Natural killer cell (primary cell): ENCODE measurements at regions of chr6 and their contacts with region 1.

Region 1: DNA sequence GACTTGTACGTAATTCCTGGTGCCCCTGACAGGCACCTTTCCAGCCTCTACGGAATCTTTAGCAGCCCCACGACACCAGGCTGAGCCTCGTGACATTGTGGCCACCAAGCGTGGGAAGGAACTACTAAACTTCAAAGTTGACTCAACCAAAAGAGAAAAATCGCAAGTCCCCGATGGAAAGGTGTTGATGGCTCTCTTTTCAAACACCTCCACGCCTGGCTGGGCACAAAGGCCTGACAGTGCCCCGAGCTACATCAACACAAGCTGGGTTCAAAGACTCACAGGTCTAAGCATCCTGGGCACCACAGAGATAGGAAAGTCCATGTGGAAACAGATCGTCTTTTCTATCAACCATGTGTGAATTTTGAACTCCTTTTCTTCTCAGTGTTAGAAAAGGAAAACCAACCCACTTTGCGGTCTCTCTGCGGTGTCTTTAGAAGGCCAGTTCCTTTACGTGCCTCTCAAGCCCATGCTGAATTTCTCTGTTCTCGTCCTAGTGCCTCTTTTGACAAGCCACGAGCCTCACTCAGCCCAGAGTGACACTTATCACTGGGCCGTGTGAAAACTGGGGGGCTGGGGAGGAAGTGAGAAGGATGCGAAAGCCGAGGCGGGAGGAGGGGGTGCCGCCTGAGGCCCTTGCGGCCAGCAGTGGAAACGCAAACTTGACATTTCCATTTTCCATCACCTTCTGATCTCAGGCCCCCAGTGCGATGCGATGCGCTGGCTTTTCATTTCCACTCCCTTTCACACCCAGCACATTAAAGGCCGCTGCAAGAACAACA is 59.4 kb downstream of the GFOD1 start:
- DNase-seq: peak; percentile 80 to 85
- ATAC-seq: peak; percentile 63 to 85 (median 83)
- H3K4me3 ChIP-seq: peak overlapping the region; percentile 10
- H3K4me3 Mint-ChIP-seq: peak overlapping the region; percentile 78
- H3K27ac ChIP-seq: peak overlapping the region; percentile 94
- H3K27ac Mint-ChIP-seq: peak overlapping the region; percentile 98 to 99
- H3K4me1 ChIP-seq: peaks cover 94% of the 10 kb centered on the region
- H3K4me1 Mint-ChIP-seq: peaks cover 95 to 96% of the 10 kb centered on the region in 2 donors
- H3K27me3 ChIP-seq: no peaks in the 10 kb centered on the region
- H3K27me3 Mint-ChIP-seq: no peaks in the 10 kb centered on the region
- CTCF ChIP-seq: peak; percentile 18

Region 2: DNA sequence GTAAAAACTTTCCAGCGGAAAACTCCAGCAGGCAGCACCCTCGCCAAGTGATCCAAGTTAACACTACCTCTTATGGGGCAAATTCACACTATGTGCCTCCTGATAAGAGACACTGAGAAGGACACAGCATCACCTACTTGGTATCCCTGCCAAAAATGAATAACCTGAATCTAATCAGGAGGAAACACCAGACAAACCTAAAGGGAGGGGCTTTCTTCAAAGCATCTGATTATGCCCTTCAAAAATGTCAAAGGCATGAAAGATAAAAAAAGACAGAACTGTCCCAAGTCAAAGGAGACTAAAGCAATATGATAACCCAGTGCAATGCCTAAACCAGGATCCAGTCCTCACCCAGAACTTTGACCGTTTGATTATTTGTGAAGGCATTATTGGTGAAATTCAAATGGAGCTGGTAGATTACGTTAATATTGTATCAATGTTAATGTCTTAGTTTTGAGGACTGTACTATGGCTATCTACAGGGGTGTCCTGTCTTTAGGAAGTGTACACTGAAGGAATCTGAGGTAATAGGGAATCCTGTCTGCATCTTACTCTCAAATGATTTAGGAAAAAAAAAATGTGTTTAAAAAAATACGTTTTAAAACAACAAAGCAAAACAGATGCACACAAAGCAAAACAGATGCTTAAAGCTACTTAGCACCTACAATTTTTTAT is 108.0 kb before region 1 on chr6:
- intact Hi-C with region 1: no loop called
- DNase-seq: no peak
- ATAC-seq: no peak
- H3K4me3 ChIP-seq: no peak overlapping the region
- H3K4me3 Mint-ChIP-seq: no peak overlapping the region
- H3K27ac ChIP-seq: no peak overlapping the region
- H3K27ac Mint-ChIP-seq: no peak overlapping the region
- H3K4me1 ChIP-seq: no peaks in the 10 kb centered on the region
- H3K4me1 Mint-ChIP-seq: no peaks in the 10 kb centered on the region
- H3K27me3 ChIP-seq: no peaks in the 10 kb centered on the region
- H3K27me3 Mint-ChIP-seq: no peaks in the 10 kb centered on the region
- CTCF ChIP-seq: no peak

Region 3: DNA sequence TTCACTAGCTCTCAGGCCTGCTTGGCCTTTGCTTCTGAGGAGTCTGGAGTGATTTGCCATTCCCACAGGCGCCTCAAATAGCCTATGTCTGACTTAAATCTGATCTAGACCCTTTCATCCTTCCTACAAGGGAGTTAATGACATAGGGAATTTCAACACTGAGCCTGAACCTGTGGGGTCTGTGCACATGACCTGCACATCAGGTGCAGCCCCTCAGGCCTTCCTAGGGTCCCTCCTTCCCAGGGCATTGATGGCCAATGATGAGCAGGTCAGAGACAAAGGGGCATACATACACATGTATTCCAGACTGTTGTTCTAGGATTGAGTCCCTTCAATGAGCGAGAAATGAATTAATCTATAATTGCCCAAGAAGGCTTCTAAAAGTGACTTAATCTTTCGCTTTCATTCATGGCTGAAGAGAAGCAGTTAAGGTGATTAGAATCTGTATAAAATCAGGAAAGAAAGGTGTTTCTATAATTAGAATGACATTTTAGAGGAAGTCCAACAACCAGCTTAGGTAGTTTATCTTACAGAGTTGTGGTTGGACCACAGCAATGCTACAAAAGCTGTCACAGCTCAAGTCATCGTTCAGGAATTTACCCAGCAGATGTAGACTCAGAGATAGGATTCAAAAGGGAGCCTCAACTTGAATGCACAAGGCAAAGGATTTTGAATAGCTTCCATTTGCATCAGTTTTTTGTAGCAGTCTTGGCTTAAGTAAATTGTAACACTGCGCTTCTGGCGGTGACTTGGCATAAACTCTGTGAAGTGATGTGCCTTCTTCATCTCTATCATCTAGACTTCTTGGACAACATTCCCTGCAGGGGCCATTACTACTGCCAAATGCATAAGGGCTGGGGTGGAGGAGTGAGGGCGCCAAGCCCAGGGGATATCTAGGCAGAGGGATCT is 72.7 kb before region 1 on chr6:
- intact Hi-C with region 1: loop called (anchors 5 kb)
- DNase-seq: peak in 1 of 2 donors; percentile 64
- ATAC-seq: peak; percentile 56 to 67 (median 62)
- H3K4me3 ChIP-seq: peak overlapping the region; percentile 15
- H3K4me3 Mint-ChIP-seq: peak overlapping the region; percentile 87
- H3K27ac ChIP-seq: peak overlapping the region; percentile 85
- H3K27ac Mint-ChIP-seq: peak overlapping the region; percentile 94
- H3K4me1 ChIP-seq: peaks cover 33% of the 10 kb centered on the region
- H3K4me1 Mint-ChIP-seq: peaks cover 54 to 55% of the 10 kb centered on the region in 2 donors
- H3K27me3 ChIP-seq: no peaks in the 10 kb centered on the region
- H3K27me3 Mint-ChIP-seq: no peaks in the 10 kb centered on the region
- CTCF ChIP-seq: no peak

Region 4: GRCh38 chr6:13454286-13455221 is 26.6 kb after region 1 on chr6:
- intact Hi-C with region 1: loop called (anchors 1 kb)
- DNase-seq: peak; percentile 81 to 86
- ATAC-seq: peak; percentile 71 to 90 (median 85)
- H3K4me3 ChIP-seq: no peak overlapping the region
- H3K4me3 Mint-ChIP-seq: peak overlapping the region; percentile 89
- H3K27ac ChIP-seq: peak overlapping the region; percentile 91
- H3K27ac Mint-ChIP-seq: peak overlapping the region; percentile 95 to 99
- H3K4me1 ChIP-seq: peaks cover 53% of the 10 kb centered on the region
- H3K4me1 Mint-ChIP-seq: peaks cover 85 to 87% of the 10 kb centered on the region in 2 donors
- H3K27me3 ChIP-seq: no peaks in the 10 kb centered on the region
- H3K27me3 Mint-ChIP-seq: no peaks in the 10 kb centered on the region
- CTCF ChIP-seq: no peak

Region 5: GRCh38 chr6:13487122-13488014 is 59.4 kb after region 1 on chr6 and contains the start of gene GFOD1:
- intact Hi-C with region 1: loop called (anchors 2 kb)
- DNase-seq: peak; percentile 77 to 84
- ATAC-seq: peak; percentile 75 to 89 (median 83)
- H3K4me3 ChIP-seq: peak within 1 kb of the TSS; percentile 85
- H3K4me3 Mint-ChIP-seq: peak within 1 kb of the TSS; percentile 90
- H3K27ac ChIP-seq: peak within 1 kb of the TSS; percentile 52
- H3K27ac Mint-ChIP-seq: peak within 1 kb of the TSS; percentile 78 to 90
- H3K4me1 ChIP-seq: peaks cover 39% of the 10 kb centered on the region
- H3K4me1 Mint-ChIP-seq: peaks cover 34 to 53% of the 10 kb centered on the region in 2 donors
- H3K27me3 ChIP-seq: no peaks in the 10 kb centered on the region
- H3K27me3 Mint-ChIP-seq: no peaks in the 10 kb centered on the region
- CTCF ChIP-seq: no peak
- total RNA-seq, gene GFOD1: 59.7 to 74.5 (median 71.2) TPM